ENCODE measurements at regions of chr2 and their contacts with region 1.

Region 1: GRCh38 chr2:96407041-96407918 is 71.7 kb downstream of the NCAPH start:
- DNase-seq: peak; percentile 83
- ATAC-seq: peak; percentile 93
- H3K4me3 Mint-ChIP-seq: no peak overlapping the region
- H3K27ac Mint-ChIP-seq: peak overlapping the region; percentile 87
- H3K4me1 Mint-ChIP-seq: peaks cover 38% of the 10 kb centered on the region
- H3K27me3 Mint-ChIP-seq: no peaks in the 10 kb centered on the region

Region 2: GRCh38 chr2:96389736-96390135 is 17.5 kb before region 1 on chr2:
- CTCF ChIA-PET with region 1: interaction called, 16 read pairs
- POLR2A ChIA-PET with region 1: no interaction called
- intact Hi-C with region 1: no loop called
- DNase-seq: no peak
- ATAC-seq: no peak
- H3K4me3 Mint-ChIP-seq: no peak overlapping the region
- H3K27ac Mint-ChIP-seq: no peak overlapping the region
- H3K4me1 Mint-ChIP-seq: peaks cover 7% of the 10 kb centered on the region
- H3K27me3 Mint-ChIP-seq: no peaks in the 10 kb centered on the region

Region 3: DNA sequence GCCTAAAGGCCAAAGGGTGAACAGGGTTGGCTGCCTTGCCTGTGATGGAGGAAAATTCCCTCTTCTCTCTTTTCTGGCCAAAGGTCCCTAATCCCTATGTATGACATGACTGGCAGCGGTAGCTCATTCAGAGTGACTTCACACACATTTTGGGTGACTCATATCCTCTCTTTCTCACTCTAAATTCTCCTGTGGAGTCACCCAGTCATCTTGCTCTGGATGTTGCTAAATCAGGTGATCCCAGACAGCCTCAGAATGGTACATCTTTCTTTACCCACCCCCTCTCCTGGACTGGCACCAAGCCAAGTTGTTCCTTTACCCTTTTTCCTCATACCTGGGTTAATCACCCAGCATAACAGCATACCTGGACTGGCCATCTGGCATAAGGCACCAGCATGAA is 20.6 kb after region 1 on chr2:
- CTCF ChIA-PET with region 1: interaction called, 21 read pairs
- POLR2A ChIA-PET with region 1: no interaction called
- intact Hi-C with region 1: no loop called
- DNase-seq: peak; percentile 58
- ATAC-seq: peak; percentile 100
- H3K4me3 Mint-ChIP-seq: no peak overlapping the region
- H3K27ac Mint-ChIP-seq: peak overlapping the region; percentile 64
- H3K4me1 Mint-ChIP-seq: peaks cover 10% of the 10 kb centered on the region
- H3K27me3 Mint-ChIP-seq: peaks cover 7% of the 10 kb centered on the region